Spleen (tissue), 13 donors: ENCODE measurements at regions of chr7 and their contacts with region 1.

Region 1: GRCh38 chr7:154927624-154928143 is 75.2 kb downstream of the PAXIP1 start:
- DNase-seq: peak; percentile 64
- H3K4me3 ChIP-seq: peak overlapping the region; percentile 49 to 70 (median 54)
- H3K27ac ChIP-seq: peak overlapping the region; percentile 83 to 95 (median 92)
- H3K4me1 ChIP-seq: peaks cover 12 to 42% (median 27%) of the 10 kb centered on the region in 6 donors
- H3K27me3 ChIP-seq: no peaks in the 10 kb centered on the region
- CTCF ChIP-seq: peak; percentile 19 to 74 (median 68)
- POLR2A ChIP-seq: no peak

Region 2: DNA sequence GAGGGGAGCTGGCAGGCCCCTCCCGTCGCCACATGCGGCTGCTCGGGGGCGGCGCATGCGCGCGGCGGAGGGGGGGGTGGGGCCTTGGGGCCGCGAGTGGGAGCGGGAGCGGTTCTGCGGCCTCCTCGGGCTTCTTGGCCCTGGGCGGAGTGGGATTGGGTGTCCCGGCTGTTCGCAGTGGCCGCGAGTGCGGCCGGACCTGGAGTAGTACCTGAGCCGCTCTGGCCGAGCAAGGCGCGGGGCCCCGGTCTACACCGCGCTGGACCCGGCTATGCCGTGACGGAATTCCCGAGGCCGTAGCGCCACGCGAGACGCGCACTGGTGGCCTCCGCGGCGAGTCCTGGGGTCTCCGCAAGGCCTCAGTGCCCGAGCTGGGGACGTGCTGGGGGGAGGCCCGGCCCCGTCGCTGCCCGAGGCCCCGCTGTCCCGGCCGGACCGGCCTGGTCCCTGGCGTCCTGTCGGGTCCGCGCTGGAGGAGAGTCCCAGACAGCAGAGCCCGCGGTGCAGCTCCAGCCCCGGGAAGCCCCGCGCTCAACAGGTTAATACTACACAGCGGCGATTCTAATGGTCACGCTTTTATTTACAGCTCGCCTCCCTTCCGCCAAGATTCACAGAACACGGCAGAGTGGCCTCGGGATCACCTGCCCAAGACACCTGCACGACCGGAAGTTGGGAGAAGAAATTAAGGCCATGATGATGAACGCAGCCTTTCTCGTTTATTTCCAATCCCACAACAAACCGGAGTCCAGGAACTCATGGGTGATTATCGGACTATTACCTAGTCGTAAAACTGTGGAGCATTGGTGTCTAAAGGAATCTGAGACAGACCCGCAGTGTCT is 75.9 kb after region 1 on chr7:
- intact Hi-C with region 1: loop called (anchors 10 kb)
- DNase-seq: peak; percentile 96
- H3K4me3 ChIP-seq: peak overlapping the region; percentile 91 to 98 (median 95)
- H3K27ac ChIP-seq: peak overlapping the region; percentile 86 to 96 (median 92)
- H3K4me1 ChIP-seq: peaks cover 11 to 50% (median 24%) of the 10 kb centered on the region in 6 donors
- H3K27me3 ChIP-seq: no peaks in the 10 kb centered on the region
- CTCF ChIP-seq: no peak
- POLR2A ChIP-seq: peak in 1 of 3 donors; percentile 57

Region 3: DNA sequence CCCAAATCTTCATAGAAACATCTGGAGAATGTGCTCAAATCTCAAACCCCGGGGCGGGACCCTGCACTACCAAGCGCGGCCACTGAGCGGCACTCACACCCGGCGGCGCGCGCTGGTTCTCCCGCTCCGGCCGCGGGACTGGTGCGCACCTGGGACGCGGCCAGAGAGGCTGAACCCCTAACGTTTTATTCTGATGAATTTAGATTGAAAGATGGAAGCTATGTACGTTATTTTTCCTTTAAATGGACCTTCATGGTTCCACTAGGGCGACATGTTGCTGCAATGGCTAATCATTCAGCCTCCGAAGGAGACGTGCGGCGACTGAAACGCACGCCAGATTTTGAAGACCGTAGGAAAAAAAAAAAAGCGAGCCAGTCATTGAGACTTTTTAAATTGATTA is 263.0 kb after region 1 on chr7:
- intact Hi-C with region 1: loop called (anchors 10 kb)
- DNase-seq: peak; percentile 93
- H3K4me3 ChIP-seq: peak overlapping the region in 1 of 8 donors; percentile 12
- H3K27ac ChIP-seq: no peak overlapping the region
- H3K4me1 ChIP-seq: peaks cover 0 to 6% (median 5%) of the 10 kb centered on the region in 6 donors
- H3K27me3 ChIP-seq: peaks cover 0 to 40% (median 0%) of the 10 kb centered on the region in 7 donors
- CTCF ChIP-seq: peak; percentile 69 to 94 (median 86)
- POLR2A ChIP-seq: no peak

Region 4: GRCh38 chr7:155205368-155206317 is 278.0 kb after region 1 on chr7:
- intact Hi-C with region 1: loop called (anchors 5 kb)
- DNase-seq: peak; percentile 96
- H3K4me3 ChIP-seq: peak overlapping the region in 7 of 8 donors; percentile 34 to 70 (median 42)
- H3K27ac ChIP-seq: peak overlapping the region; percentile 72 to 97 (median 90)
- H3K4me1 ChIP-seq: peaks cover 0 to 30% (median 15%) of the 10 kb centered on the region in 6 donors
- H3K27me3 ChIP-seq: no peaks in the 10 kb centered on the region
- CTCF ChIP-seq: peak in 1 of 11 experiments; percentile 25
- POLR2A ChIP-seq: peak in 1 of 3 donors; percentile 32

Region 5: DNA sequence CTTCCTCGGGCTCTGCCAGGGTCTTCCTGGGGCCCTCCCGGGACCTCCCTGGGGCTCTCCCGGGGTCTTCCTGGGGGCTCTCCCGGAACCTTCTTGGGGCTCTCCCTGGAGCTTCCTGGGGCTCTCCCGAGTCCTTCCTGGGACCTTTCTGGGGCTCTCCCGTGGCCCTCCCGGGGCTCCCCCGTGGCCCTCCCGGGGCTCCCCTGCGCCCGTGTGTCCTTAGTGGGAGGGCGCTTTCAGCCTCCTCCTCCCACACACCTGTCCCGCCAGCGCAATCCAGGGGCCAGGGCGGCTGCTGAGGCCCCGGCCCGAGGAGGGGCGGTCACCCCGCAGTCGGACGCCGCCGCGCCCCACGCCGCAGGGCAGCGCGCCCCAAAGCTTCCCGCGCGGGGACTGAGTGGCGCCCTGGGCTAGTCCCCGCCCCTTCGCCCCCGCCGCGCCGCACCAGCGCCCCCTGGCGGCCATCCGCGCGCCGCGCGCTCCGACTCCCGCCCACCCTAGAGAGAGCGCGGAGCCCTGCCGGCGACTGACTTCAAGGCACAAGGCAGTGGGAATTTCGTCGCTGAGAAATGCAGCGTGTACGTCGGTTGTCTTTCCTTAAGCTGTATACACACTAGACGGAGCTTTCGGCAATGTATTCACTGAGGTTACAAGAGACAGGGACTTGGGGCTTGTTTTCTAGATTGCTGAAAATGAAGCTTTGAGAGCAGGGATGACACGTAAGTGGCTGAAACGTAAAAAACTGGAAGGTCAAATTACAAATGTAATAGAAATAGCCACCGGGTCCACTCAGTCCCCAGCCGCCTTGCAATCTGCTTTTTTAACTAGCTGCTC is 417.1 kb after region 1 on chr7:
- intact Hi-C with region 1: loop called (anchors 5 kb)
- DNase-seq: peak; percentile 96
- H3K4me3 ChIP-seq: peak overlapping the region; percentile 26 to 69 (median 36)
- H3K27ac ChIP-seq: peak overlapping the region in 1 of 8 donors; percentile 15
- H3K4me1 ChIP-seq: peaks cover 0 to 14% (median 11%) of the 10 kb centered on the region in 6 donors
- H3K27me3 ChIP-seq: peaks cover 0 to 42% (median 5%) of the 10 kb centered on the region in 7 donors
- CTCF ChIP-seq: peak; percentile 67 to 99 (median 93)
- POLR2A ChIP-seq: no peak

Region 6: DNA sequence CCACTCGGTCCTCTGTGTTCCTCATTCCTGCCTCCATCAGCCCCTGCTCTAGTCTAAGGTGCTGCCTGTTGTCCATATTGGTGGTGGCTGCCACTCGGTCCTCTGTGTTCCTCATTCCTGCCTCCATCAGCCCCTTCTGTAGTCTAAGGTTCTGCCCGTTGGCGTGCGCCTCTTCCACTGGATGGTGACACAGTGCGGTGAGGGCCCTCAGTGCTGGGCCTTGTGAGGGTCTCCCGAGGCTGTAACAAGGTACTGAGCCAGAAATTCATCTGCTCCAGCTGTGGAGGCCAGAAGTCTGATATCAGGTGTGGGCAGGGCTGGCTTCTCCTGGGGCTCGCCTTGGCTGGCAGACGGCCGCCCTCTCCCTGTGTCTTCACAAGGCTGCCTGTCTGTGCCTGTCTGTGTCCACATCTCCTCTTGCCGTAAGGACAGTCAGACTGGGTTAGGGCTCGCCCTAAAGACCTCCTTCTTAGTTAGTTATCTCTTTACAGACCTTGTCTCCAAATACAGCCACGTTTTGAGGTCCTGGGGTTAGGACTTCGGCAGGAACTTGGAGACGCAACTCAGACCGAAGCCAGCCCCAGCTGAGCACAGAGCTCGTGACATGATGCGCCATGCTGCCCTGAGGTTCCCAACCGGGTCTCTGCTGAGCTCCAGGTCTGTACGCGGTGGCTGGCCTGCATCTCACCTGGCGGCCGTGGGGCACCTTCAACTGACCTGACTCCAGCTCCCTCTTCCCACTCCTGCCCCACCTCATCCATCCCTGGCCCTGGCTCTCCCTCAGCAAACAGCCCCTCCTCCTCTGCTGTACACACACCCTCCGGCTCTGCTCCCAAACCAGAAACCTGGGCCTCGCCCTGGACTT is 1066.0 kb after region 1 on chr7:
- intact Hi-C with region 1: no loop called
- DNase-seq: no peak
- H3K4me3 ChIP-seq: no peak overlapping the region
- H3K27ac ChIP-seq: no peak overlapping the region
- H3K4me1 ChIP-seq: peaks cover 0 to 5% (median 0%) of the 10 kb centered on the region in 6 donors
- H3K27me3 ChIP-seq: peaks cover 0 to 36% (median 0%) of the 10 kb centered on the region in 7 donors
- CTCF ChIP-seq: no peak
- POLR2A ChIP-seq: no peak